Posterior vena cava (tissue), 2 donors: ENCODE measurements at regions of chr1 and their contacts with region 1.

Region 1: GRCh38 chr1:39381839-39382238 is 109.6 kb upstream of the BMP8A start:
- DNase-seq: no peak

Region 2: GRCh38 chr1:38370716-38371504 is 1010.9 kb before region 1 on chr1:
- intact Hi-C with region 1: no loop called
- DNase-seq: no peak

Region 3: DNA sequence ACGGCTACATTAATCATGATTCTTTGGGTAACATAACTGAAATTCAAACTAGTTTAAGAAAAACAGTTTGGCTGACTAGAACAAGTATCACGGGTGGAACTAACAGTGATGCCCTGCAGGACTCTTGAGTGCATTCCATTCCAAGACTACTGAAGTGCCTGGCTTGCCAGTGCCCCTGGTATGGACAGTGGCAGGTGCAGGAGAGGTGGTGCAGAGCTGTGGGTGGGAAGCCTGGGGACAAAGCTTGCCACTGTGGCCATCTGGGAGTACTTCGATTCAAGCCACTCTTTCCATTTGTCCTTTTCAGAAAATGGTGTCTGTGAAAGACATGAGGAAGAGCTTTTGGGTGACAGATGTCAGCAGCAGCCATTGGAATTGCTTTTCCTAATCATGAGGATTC is 688.8 kb before region 1 on chr1:
- intact Hi-C with region 1: no loop called
- DNase-seq: no peak

Region 4: DNA sequence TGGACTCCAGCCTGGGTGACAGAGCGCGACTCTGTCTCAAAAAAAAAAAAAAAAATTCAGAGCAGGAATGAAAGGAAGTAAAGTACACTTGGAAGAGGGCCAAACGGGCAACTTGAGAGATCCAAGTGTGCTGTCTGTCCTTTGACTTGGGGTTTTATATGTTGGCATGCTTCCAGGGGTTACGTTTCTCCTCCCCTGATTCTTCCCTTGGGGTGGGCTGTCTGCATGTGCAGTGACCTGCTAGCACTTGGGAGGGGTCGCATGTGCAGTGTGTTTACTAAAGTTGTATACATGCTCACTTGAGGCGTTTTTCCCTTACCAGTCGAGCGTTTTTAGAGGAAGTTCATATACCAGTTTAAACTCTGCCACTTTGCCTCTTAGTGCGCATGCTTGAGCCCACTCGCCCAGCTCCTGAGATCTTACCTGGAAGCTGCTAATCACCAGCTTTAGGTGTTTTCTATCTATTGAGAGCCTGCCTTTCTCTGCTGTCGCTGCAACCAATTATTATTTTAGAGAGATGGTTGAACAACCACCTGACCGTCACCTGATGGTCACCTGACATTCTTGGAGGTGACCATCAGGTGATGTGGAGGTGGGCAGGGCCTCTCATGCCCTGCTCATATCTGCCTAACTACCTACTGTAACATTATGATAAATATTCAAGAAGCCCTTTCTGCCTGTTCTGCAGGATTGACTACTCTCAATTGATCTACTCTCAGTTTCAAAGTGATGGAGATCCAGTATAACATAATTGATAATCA is 37.3 kb before region 1 on chr1:
- intact Hi-C with region 1: loop called in 1 of 2 experiments (anchors 1 kb)
- DNase-seq: no peak

Region 5: DNA sequence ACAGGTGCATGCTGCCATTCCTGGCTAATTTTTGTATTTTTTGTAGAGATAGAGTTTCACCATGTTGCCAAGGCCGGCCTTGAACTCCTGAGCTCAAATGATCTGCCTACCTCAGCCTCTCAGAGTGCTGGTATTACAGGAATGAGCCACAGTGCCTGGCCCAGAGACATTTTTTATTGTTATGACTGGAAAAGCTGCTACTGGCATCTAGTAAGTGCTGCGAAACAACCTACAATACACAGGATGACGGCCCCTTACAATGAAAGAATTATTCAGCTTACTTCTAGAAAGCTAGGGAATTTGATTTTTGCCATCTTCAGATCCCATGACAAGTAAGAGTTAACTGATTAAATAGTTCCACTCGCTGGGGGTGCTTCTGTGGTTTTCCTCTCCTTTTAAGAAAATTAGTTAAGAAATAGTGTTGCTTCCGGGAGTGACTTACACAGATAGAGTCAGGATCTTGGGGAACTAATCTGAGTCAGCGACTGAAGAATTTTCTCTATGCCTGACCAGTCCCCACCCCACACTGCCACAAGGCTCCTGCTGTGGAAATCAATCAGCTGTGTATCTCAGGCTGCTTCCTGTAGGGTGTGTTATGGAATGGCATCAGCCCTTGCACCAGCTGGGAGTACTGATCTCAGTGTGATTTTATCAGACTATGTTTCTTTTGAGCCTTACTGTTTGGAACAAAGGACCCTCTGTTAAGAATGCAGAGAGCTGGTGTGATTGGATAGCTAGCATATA is 16.6 kb after region 1 on chr1:
- intact Hi-C with region 1: no loop called
- DNase-seq: peak; percentile 86